ENCODE measurements at regions of chr6 and their contacts with region 1.

Region 1: GRCh38 chr6:157823001-157823527 is at the start of gene SNX9:
- DNase-seq: peak; percentile 81
- H3K4me3 ChIP-seq: peak within 1 kb of the TSS; percentile 81
- H3K27ac ChIP-seq: peak within 1 kb of the TSS; percentile 95
- H3K4me1 ChIP-seq: peaks cover 3% of the 10 kb centered on the region
- H3K27me3 ChIP-seq: no peaks in the 10 kb centered on the region
- CTCF ChIP-seq: no peak
- total RNA-seq, gene SNX9: 37.3 to 81.7 TPM

Region 2: DNA sequence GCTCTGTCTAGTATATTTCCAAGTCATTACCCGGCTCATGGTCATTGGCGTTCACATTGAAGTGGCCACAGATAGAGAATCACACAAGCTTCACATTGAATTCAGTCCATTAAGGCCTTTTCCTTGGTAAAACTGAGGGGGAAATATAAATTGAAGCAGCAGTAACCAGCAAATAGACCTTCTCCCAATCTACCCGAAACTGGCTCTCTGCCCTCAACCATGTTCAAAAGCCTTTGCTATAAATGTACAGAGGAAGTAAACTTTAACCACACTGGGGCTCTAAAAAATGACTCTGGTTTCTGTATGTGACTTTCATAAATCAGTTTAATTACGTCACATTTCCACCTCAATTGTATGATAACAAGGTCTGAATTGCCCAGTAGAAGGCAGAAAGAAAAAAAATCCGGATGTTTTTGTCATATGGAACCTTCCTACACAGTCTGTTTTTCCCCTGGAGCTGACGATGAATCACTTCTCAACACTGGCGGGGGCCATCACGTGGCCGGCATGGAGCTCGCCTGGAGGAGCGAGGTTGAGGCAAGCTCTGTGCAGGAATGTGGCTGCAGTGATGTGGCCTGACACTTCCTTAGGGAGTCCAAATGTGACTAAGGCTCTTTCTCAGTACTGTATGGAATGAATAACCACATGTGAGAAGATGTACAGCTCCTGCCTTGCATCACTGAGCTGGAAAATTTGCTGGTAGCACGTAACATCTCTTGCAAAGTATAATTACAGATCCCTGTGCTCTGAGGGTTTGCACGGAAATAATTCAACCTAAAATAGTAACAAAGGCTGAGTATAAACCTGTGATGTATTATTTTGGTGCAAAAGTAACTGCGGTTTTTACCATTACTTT is 58.7 kb before region 1 on chr6:
- intact Hi-C with region 1: loop called (anchors 5 kb)
- DNase-seq: peak; percentile 87
- H3K4me3 ChIP-seq: no peak overlapping the region
- H3K27ac ChIP-seq: peak overlapping the region; percentile 89
- H3K4me1 ChIP-seq: peaks cover 11% of the 10 kb centered on the region
- H3K27me3 ChIP-seq: no peaks in the 10 kb centered on the region
- CTCF ChIP-seq: no peak

Region 3: GRCh38 chr6:157954150-157955117 is 131.4 kb after region 1 on chr6:
- intact Hi-C with region 1: no loop called
- DNase-seq: peak; percentile 92
- H3K4me3 ChIP-seq: peak overlapping the region; percentile 0
- H3K27ac ChIP-seq: peak overlapping the region; percentile 79
- H3K4me1 ChIP-seq: no peaks in the 10 kb centered on the region
- H3K27me3 ChIP-seq: no peaks in the 10 kb centered on the region
- CTCF ChIP-seq: no peak